ENCODE measurements at regions of chr15 and their contacts with region 1.

Region 1: DNA sequence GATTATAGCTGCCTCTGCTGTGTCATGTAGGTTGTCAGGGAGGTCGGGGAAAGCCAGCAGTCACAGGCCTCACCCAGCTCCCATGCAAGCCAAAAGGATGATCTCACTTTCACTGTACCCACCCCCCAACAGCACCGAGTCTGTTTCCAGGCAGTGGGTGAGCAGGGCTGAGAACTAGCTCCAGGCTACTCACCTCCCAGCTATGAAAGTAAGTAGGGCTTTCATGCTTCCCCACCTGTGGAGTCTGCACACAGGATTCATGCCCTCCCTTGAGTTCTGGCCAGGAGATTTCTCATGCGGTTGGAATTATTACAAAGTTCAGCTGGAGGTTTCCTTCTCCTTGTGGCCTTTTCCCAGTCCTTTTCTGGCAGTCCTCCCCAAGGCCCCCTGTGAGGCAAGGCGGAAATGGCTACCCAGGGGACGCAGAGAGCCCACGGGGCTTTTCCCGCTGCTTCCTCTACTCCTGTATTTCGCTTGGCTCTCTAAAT is 356.2 kb downstream of the SV2B start:
- DNase-seq: peak; percentile 88
- H3K4me3 Mint-ChIP-seq: peak overlapping the region; percentile 59
- H3K27ac Mint-ChIP-seq: peak overlapping the region; percentile 92
- H3K4me1 Mint-ChIP-seq: peaks cover 44% of the 10 kb centered on the region
- H3K27me3 Mint-ChIP-seq: no peaks in the 10 kb centered on the region
- CTCF ChIP-seq: no peak

Region 2: DNA sequence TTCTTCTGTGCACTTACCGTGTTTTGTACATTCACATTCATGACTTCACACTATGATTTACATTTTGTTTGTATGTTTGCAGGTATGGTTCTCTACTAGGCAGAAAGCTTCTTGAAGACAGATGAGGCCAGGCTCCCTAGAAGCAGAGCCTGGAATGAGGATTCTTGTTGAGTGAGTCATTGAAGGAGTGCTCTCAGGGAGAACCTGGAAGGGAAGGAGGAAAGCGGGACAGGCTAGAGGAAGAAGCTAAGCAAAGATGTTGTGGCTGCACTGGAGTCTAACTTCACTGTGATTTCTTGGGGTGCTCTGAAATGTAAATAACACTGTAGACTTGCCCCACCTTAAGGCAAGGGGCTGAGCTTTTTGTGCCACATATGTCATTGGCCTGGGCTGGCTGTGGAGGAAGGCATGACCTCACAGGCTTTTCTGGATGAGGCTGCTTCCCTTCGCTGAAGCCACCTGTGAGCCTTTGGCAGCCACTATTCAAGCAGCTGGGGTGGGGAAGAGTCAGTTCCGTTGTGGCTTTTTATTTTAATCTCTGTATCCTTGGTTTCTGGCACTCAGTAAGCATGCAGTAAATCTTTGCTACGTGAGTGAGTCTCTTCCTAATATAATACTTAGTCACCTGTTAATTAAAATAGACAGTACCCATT is 48.9 kb before region 1 on chr15:
- CTCF ChIA-PET with region 1: interaction called, 4 read pairs
- intact Hi-C with region 1: loop called (anchors 1 kb)
- DNase-seq: peak; percentile 48
- H3K4me3 Mint-ChIP-seq: peak overlapping the region; percentile 13
- H3K27ac Mint-ChIP-seq: peak overlapping the region; percentile 61
- H3K4me1 Mint-ChIP-seq: peaks cover 24% of the 10 kb centered on the region
- H3K27me3 Mint-ChIP-seq: no peaks in the 10 kb centered on the region
- CTCF ChIP-seq: no peak

Region 3: DNA sequence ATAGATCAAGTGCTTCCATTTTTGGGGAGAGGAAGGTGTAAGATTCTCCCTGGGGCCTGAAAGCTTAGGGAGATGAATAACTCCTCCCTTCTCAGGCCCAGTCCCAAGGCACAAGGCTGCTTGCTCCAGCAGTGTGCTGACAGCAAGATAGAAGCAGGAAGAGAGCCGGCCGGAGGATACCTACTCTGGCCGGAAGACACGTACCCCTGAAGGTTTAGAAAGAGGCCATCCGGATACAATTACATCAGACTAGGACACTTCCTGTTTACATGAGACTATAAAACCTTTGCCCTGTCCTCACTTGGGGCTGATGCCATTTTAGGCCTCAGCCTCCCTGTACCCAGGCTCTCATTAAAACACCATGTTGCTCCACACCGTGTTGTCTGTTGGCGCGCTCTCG is 26.3 kb before region 1 on chr15:
- CTCF ChIA-PET with region 1: interaction called, 8 read pairs
- intact Hi-C with region 1: loop called (anchors 2 kb)
- DNase-seq: no peak
- H3K4me3 Mint-ChIP-seq: no peak overlapping the region
- H3K27ac Mint-ChIP-seq: no peak overlapping the region
- H3K4me1 Mint-ChIP-seq: peaks cover 23% of the 10 kb centered on the region
- H3K27me3 Mint-ChIP-seq: no peaks in the 10 kb centered on the region
- CTCF ChIP-seq: no peak

Region 4: DNA sequence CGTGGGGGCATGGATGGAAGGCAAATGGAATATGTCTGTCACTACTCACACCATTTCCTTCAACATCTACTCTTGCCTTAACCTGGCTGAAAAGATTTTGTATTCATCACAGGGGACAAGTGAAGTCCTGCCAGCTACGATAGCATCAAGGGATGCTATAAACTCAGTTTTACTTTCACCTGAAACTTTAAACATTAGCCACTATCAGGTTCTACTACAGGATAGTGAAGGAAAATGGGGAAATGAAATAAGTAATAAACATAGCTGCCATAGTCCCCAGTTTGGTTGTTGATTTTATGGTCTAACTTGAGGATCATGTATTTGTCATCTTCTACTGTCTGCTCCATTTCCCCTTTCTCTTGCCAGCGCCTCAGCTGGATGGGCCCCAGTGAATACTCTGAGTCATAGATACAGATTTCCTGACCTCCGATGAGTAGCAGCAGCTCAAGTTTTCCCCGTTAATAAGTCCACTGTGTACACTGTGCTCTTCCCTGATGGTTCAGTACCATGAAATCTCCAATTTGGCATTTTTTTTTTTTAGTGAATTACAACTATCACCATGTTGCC is 59.0 kb after region 1 on chr15:
- CTCF ChIA-PET with region 1: interaction called, 5 read pairs
- intact Hi-C with region 1: loop called (anchors 2 kb)
- DNase-seq: peak; percentile 51
- H3K4me3 Mint-ChIP-seq: no peak overlapping the region
- H3K27ac Mint-ChIP-seq: no peak overlapping the region
- H3K4me1 Mint-ChIP-seq: peaks cover 39% of the 10 kb centered on the region
- H3K27me3 Mint-ChIP-seq: no peaks in the 10 kb centered on the region
- CTCF ChIP-seq: no peak